Caco-2 (cell line): ENCODE measurements at regions of chr1 and their contacts with region 1.

Region 1: GRCh38 chr1:76154206-76154956 is 79.8 kb downstream of the ST6GALNAC3 start:
- DNase-seq: peak; percentile 41 to 60
- H3K4me3 ChIP-seq: no peak overlapping the region
- H3K4me3 Mint-ChIP-seq: no peak overlapping the region
- H3K27ac Mint-ChIP-seq: no peak overlapping the region
- H3K4me1 ChIP-seq: no peaks in the 10 kb centered on the region
- H3K4me1 Mint-ChIP-seq: no peaks in the 10 kb centered on the region
- H3K27me3 ChIP-seq: no peaks in the 10 kb centered on the region
- H3K27me3 Mint-ChIP-seq: no peaks in the 10 kb centered on the region
- CTCF ChIP-seq: peak; percentile 73 to 81

Region 2: DNA sequence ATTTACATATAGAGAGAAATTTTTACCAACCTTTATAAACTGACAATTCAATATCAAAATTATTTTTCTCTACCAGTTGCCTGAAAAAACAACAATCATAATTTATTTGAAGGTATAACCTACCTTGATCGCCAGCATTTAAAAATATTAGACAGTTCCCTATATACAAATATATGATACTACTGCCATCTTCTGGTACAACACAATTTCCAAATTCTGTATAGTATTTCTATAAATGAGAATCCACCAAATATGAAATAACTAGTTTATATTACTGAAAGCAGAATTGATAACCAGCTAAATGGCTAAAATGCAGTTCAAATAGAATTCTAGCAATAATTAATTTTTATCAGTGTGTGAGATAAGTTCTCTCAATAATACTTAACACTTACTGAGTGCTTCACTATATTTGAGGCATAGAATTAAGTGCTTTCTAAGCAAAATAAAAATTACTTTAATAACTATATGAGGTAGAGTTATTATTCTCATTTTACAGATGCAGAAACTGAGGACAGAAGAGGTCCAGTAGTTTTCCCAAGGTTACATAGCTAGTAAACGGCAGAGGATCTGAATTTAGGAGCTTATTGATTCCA is 989.2 kb after region 1 on chr1:
- CTCF ChIA-PET with region 1: no interaction called
- POLR2A ChIA-PET with region 1: no interaction called
- intact Hi-C with region 1: loop called (anchors 10 kb)
- DNase-seq: no peak
- H3K4me3 ChIP-seq: no peak overlapping the region
- H3K4me3 Mint-ChIP-seq: no peak overlapping the region
- H3K27ac Mint-ChIP-seq: no peak overlapping the region
- H3K4me1 ChIP-seq: no peaks in the 10 kb centered on the region
- H3K4me1 Mint-ChIP-seq: no peaks in the 10 kb centered on the region
- H3K27me3 ChIP-seq: no peaks in the 10 kb centered on the region
- H3K27me3 Mint-ChIP-seq: no peaks in the 10 kb centered on the region
- CTCF ChIP-seq: peak in 1 of 2 experiments; percentile 21